CD4-positive, alpha-beta memory T cell (primary cell): ENCODE measurements at regions of chr20 and their contacts with region 1.

Region 1: GRCh38 chr20:1503564-1504227 is 12.5 kb upstream of the SIRPB2 start:
- DNase-seq: peak; percentile 76 to 83 (median 76)
- H3K4me3 ChIP-seq: no peak overlapping the region
- H3K4me3 Mint-ChIP-seq: no peak overlapping the region
- H3K27ac ChIP-seq: no peak overlapping the region
- H3K27ac Mint-ChIP-seq: peak overlapping the region in 1 of 7 donors; percentile 70
- H3K4me1 ChIP-seq: peaks cover 3% of the 10 kb centered on the region
- H3K4me1 Mint-ChIP-seq: peaks cover 3 to 6% (median 4%) of the 10 kb centered on the region in 4 donors
- H3K27me3 ChIP-seq: peaks cover 6% of the 10 kb centered on the region
- H3K27me3 Mint-ChIP-seq: peaks cover 25 to 35% of the 10 kb centered on the region in 2 donors

Region 2: DNA sequence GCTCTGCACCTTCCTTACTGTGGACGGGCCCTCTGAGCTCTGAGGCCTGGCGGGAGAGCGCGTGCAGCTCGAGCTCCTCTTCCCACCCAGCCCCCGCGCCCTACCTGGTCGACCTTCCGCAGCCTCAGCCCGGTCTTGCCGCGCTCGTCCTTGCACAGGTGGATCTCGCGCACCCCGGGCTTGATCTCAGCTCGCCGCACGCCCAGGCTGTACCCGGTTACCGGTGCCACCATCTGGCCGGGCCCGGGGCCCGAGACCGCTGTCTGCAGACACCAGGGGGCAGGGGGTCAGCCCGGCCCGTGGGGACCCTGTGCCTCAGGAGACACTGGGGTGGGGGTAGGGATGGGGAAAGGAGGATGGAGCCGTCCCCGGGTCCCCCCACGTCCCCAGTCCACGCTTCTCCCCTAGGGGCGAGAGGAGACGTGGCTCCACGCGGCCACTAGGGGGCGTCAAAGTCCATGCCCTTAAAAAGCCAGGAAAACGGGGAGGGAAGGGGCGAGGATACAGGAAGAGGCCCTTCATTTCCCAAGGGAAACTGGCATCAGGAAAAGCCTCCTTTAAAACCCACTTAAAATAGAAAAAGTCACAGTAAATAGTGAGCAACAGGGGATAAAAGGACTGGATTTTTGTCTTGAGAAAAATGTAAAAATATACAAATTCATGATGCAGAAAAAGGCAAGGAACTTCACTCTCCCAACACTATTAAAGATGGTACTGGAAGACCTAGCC is 190.3 kb before region 1 on chr20:
- CTCF ChIA-PET with region 1: interaction called, 4 read pairs
- POLR2A ChIA-PET with region 1: no interaction called
- intact Hi-C with region 1: loop called (anchors 1 kb)
- DNase-seq: peak; percentile 54 to 59 (median 54)
- H3K4me3 ChIP-seq: no peak overlapping the region
- H3K4me3 Mint-ChIP-seq: no peak overlapping the region
- H3K27ac ChIP-seq: no peak overlapping the region
- H3K27ac Mint-ChIP-seq: peak overlapping the region in 1 of 7 donors; percentile 54
- H3K4me1 ChIP-seq: peaks cover 8% of the 10 kb centered on the region
- H3K4me1 Mint-ChIP-seq: peaks cover 4 to 10% (median 7%) of the 10 kb centered on the region in 4 donors
- H3K27me3 ChIP-seq: no peaks in the 10 kb centered on the region
- H3K27me3 Mint-ChIP-seq: no peaks in the 10 kb centered on the region

Region 3: GRCh38 chr20:1466211-1467081 is 37.2 kb before region 1 on chr20 and contains the start of gene NSFL1C:
- CTCF ChIA-PET with region 1: interaction called, 20 read pairs
- POLR2A ChIA-PET with region 1: interaction called, 6 read pairs
- intact Hi-C with region 1: loop called (anchors 2 kb)
- DNase-seq: peak; percentile 95 to 99 (median 97)
- H3K4me3 ChIP-seq: peak within 1 kb of the TSS; percentile 53 to 65
- H3K4me3 Mint-ChIP-seq: peak within 1 kb of the TSS; percentile 78 to 93 (median 88)
- H3K27ac ChIP-seq: peak within 1 kb of the TSS; percentile 89
- H3K27ac Mint-ChIP-seq: peak within 1 kb of the TSS; percentile 66 to 95 (median 91)
- H3K4me1 ChIP-seq: peaks cover 41% of the 10 kb centered on the region
- H3K4me1 Mint-ChIP-seq: peaks cover 34 to 49% (median 40%) of the 10 kb centered on the region in 4 donors
- H3K27me3 ChIP-seq: no peaks in the 10 kb centered on the region
- H3K27me3 Mint-ChIP-seq: peaks cover 1 to 5% of the 10 kb centered on the region in 2 donors
- total RNA-seq, gene NSFL1C: 57.5 to 65.8 TPM

Region 4: DNA sequence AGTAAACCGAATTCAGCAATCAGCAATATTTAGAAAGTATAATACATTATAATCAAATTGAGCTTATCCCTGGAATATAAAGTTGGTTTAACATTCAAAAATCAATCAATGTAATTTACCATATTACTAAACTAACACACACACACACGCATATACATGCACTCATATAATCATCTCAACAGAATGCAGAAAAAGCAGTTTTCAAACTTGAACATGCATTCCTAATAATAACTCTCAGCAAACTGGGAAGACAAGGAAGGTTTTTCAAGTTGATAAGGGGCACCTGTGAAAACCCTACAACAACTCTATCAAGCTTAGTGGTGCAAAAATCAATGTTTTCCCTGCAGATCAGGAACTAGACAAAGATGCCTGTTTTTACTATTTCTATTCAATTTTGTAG is 17.1 kb before region 1 on chr20:
- CTCF ChIA-PET with region 1: interaction called, 12 read pairs
- POLR2A ChIA-PET with region 1: no interaction called
- intact Hi-C with region 1: no loop called
- DNase-seq: no peak
- H3K4me3 ChIP-seq: no peak overlapping the region
- H3K4me3 Mint-ChIP-seq: no peak overlapping the region
- H3K27ac ChIP-seq: no peak overlapping the region
- H3K27ac Mint-ChIP-seq: no peak overlapping the region
- H3K4me1 ChIP-seq: no peaks in the 10 kb centered on the region
- H3K4me1 Mint-ChIP-seq: no peaks in the 10 kb centered on the region
- H3K27me3 ChIP-seq: no peaks in the 10 kb centered on the region
- H3K27me3 Mint-ChIP-seq: peaks cover 42 to 51% of the 10 kb centered on the region in 2 donors

Region 5: GRCh38 chr20:1517010-1517409 is 13.3 kb after region 1 on chr20:
- CTCF ChIA-PET with region 1: interaction called, 16 read pairs
- POLR2A ChIA-PET with region 1: no interaction called
- intact Hi-C with region 1: no loop called
- DNase-seq: no peak
- H3K4me3 ChIP-seq: no peak overlapping the region
- H3K4me3 Mint-ChIP-seq: no peak overlapping the region
- H3K27ac ChIP-seq: no peak overlapping the region
- H3K27ac Mint-ChIP-seq: no peak overlapping the region
- H3K4me1 ChIP-seq: no peaks in the 10 kb centered on the region
- H3K4me1 Mint-ChIP-seq: no peaks in the 10 kb centered on the region
- H3K27me3 ChIP-seq: no peaks in the 10 kb centered on the region
- H3K27me3 Mint-ChIP-seq: peaks cover 5 to 10% of the 10 kb centered on the region in 2 donors

Region 6: GRCh38 chr20:1524004-1524403 is 20.3 kb after region 1 on chr20:
- CTCF ChIA-PET with region 1: interaction called, 11 read pairs
- POLR2A ChIA-PET with region 1: no interaction called
- intact Hi-C with region 1: no loop called
- DNase-seq: no peak
- H3K4me3 ChIP-seq: no peak overlapping the region
- H3K4me3 Mint-ChIP-seq: no peak overlapping the region
- H3K27ac ChIP-seq: no peak overlapping the region
- H3K27ac Mint-ChIP-seq: no peak overlapping the region
- H3K4me1 ChIP-seq: no peaks in the 10 kb centered on the region
- H3K4me1 Mint-ChIP-seq: peaks cover 0 to 4% (median 3%) of the 10 kb centered on the region in 4 donors
- H3K27me3 ChIP-seq: no peaks in the 10 kb centered on the region
- H3K27me3 Mint-ChIP-seq: peaks cover 4 to 9% of the 10 kb centered on the region in 2 donors

Region 7: GRCh38 chr20:1816384-1817381 is 313.0 kb after region 1 on chr20:
- CTCF ChIA-PET with region 1: no interaction called
- POLR2A ChIA-PET with region 1: no interaction called
- intact Hi-C with region 1: no loop called
- DNase-seq: no peak
- H3K4me3 ChIP-seq: no peak overlapping the region
- H3K4me3 Mint-ChIP-seq: peak overlapping the region in 5 of 8 donors; percentile 14 to 66 (median 36)
- H3K27ac ChIP-seq: no peak overlapping the region
- H3K27ac Mint-ChIP-seq: peak overlapping the region in 2 of 7 donors; percentile 22 to 81
- H3K4me1 ChIP-seq: no peaks in the 10 kb centered on the region
- H3K4me1 Mint-ChIP-seq: peaks cover 4 to 7% (median 6%) of the 10 kb centered on the region in 4 donors
- H3K27me3 ChIP-seq: peaks cover 9% of the 10 kb centered on the region
- H3K27me3 Mint-ChIP-seq: peaks cover 41 to 43% of the 10 kb centered on the region in 2 donors